Panc1 (cell line): ENCODE measurements at regions of chr19 and their contacts with region 1.

Region 1: GRCh38 chr19:14571695-14572490 is at the start of gene NDUFB7:
- DNase-seq: peak; percentile 82
- ATAC-seq: peak; percentile 95
- H3K4me3 ChIP-seq: peak within 1 kb of the TSS; percentile 60 to 76
- H3K27ac ChIP-seq: peak within 1 kb of the TSS; percentile 85
- H3K4me1 ChIP-seq: peaks cover 3% of the 10 kb centered on the region
- H3K27me3 ChIP-seq: no peaks in the 10 kb centered on the region
- CTCF ChIP-seq: peak; percentile 92
- total RNA-seq, gene NDUFB7: 180 TPM

Region 2: DNA sequence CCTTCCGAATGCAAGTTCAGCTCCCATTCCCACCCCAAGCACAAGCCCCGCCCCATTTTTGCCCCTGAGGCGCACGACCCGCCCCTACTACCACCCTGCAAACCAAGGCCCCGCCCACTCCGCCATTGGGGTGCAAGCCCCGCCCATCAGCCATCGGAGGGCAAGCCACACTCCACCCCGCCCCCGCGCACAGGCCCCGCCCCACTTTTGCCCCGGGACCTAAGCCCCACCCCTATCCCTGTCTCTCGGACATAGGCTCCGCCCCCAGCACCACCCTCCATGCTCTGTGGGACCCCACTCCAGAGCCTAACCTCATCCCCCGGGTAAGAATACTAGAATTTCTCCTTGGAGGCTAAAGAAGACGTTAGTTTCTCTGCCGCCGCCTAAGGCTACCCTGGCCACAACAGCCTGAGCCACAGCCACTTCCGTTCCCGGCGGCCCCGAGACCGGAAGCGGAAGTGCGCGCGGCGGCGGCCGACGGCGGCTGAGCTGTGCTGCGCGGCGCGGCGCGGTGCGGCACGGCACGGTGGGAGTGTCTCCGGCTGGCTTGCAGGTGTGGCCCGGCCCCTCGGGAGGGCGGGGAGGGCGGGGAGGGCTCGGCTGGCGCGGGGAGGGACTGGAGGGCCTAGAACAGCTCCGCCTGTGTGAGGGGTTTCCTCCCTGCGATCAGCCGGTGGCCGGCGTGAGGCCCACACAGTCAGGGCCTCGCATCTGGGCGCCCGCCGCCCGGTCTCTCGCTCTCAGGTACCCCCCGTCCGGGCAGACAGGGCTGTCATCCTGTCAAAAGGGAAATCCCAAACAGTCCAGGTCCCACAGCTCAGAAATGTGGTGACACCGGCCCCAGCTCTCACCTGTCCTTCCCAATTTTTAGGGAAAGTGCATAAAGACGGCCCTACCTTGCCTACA is 118.0 kb after region 1 on chr19 and contains the start of gene ZNF333:
- CTCF ChIA-PET with region 1: interaction called, 43 read pairs
- POLR2A ChIA-PET with region 1: interaction called, 6 read pairs
- in situ Hi-C with region 1: no loop called
- intact Hi-C with region 1: loop called (anchors 1 kb)
- DNase-seq: peak; percentile 59
- ATAC-seq: peak; percentile 99
- H3K4me3 ChIP-seq: peak within 1 kb of the TSS; percentile 72 to 87
- H3K27ac ChIP-seq: peak within 1 kb of the TSS; percentile 75
- H3K4me1 ChIP-seq: no peaks in the 10 kb centered on the region; the same call in 1 of the 2 replicates
- H3K27me3 ChIP-seq: no peaks in the 10 kb centered on the region
- CTCF ChIP-seq: no peak
- total RNA-seq, gene ZNF333: 9.2 TPM

Region 3: DNA sequence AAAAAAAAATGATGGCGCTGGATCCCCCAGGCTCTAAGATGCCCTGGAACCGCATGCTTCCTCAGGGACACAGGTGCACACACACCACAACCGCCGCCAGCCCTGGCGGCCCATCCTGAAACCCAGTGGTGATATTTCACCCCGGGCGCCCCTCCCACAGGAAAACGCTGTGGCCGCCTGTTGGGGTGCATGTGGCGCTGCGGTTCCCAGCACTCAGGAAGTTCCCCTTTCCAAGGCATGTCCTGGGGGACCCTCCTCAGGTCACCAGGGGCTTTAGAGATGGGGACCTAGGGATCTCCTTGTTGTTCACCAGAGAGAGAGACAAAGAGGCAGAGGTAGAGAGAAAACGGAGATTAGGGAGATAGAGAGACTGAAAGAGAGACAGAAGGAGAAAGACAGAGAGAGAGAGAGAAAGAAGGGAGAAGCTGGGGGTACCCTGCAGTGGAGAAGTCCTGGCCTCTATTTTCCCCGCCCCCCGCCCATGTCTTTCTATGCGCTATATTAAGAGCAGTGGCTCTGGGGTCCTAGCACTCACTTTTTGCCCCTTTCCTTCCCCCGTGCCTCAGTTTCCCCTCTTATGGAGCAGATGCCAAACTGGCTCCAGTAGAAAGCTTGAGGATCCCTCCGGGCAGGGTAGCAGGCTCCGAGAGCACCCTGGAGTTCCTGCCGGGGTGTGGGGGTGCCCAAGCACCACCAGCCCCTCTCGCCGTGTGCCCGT is 204.1 kb after region 1 on chr19:
- CTCF ChIA-PET with region 1: interaction called, 11 read pairs
- POLR2A ChIA-PET with region 1: no interaction called
- in situ Hi-C with region 1: no loop called
- intact Hi-C with region 1: no loop called
- DNase-seq: no peak
- ATAC-seq: peak; percentile 46; the same call in 1 of the 2 replicates
- H3K4me3 ChIP-seq: peak overlapping the region; percentile 15 to 32
- H3K27ac ChIP-seq: no peak overlapping the region
- H3K4me1 ChIP-seq: no peaks in the 10 kb centered on the region
- H3K27me3 ChIP-seq: no peaks in the 10 kb centered on the region
- CTCF ChIP-seq: no peak